ENCODE measurements at regions of chr7 and their contacts with region 1.

Region 1: GRCh38 chr7:107924841-107925504 is 34.0 kb downstream of the DLD start:
- DNase-seq: peak in 2 of 14 experiments; percentile 17 to 23
- ATAC-seq: peak; percentile 43
- H3K4me3 ChIP-seq: no peak overlapping the region
- H3K4me3 Mint-ChIP-seq: peak overlapping the region; percentile 5
- H3K27ac ChIP-seq: no peak overlapping the region
- H3K27ac Mint-ChIP-seq: peak overlapping the region; percentile 3
- H3K4me1 ChIP-seq: peaks cover 6% of the 10 kb centered on the region
- H3K4me1 Mint-ChIP-seq: peaks cover 54% of the 10 kb centered on the region
- H3K27me3 ChIP-seq: no peaks in the 10 kb centered on the region
- H3K27me3 Mint-ChIP-seq: no peaks in the 10 kb centered on the region
- CTCF ChIP-seq: no peak

Region 2: DNA sequence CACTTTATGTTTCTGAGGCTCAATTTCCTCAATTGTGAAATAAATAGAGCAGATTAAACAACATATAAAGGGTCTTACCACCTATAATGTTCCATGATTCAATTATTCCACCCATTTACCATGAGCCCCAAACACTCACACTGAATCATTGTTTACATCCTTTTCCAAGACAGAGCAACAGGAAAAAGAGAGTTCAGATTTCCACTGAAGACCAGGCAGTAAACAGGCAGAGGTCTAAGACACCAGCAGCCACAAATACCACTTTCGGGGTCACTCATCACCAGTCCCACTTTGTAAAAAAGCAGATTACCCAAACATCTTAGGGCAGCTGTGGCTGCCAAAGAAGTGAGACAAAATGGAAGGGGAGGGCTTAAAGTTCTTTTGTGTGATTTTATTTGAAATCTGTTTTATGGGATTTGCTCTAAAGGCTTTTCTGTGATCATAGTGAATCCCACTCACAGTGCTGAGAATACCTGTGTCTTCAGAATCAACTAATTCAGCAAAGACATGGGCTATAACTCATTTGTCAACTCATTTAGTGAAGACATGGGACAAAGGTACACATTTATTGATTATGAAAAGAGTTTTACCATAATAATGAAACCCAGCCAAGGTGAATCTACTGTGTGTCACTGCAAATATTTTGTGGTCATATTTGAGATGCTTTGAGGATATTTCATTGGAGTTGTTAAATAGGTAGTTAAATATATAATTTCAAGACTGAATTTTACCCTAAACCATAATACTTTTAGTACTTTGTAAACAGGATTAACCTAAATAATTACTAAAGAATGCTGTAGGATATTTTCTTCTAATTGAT is 58.8 kb before region 1 on chr7:
- CTCF ChIA-PET with region 1: no interaction called
- POLR2A ChIA-PET with region 1: no interaction called
- intact Hi-C with region 1: no loop called
- DNase-seq: no peak
- ATAC-seq: no peak
- H3K4me3 ChIP-seq: no peak overlapping the region
- H3K4me3 Mint-ChIP-seq: no peak overlapping the region
- H3K27ac ChIP-seq: peak overlapping the region in 1 of 2 donors; percentile 23
- H3K27ac Mint-ChIP-seq: peak overlapping the region; percentile 46
- H3K4me1 ChIP-seq: peaks cover 20% of the 10 kb centered on the region
- H3K4me1 Mint-ChIP-seq: peaks cover 34% of the 10 kb centered on the region
- H3K27me3 ChIP-seq: no peaks in the 10 kb centered on the region
- H3K27me3 Mint-ChIP-seq: no peaks in the 10 kb centered on the region
- CTCF ChIP-seq: no peak

Region 3: GRCh38 chr7:107911981-107912380 is 13.0 kb before region 1 on chr7:
- CTCF ChIA-PET with region 1: no interaction called
- POLR2A ChIA-PET with region 1: no interaction called
- intact Hi-C with region 1: loop called in 1 of 2 experiments (anchors 2 kb)
- DNase-seq: no peak
- ATAC-seq: no peak
- H3K4me3 ChIP-seq: no peak overlapping the region
- H3K4me3 Mint-ChIP-seq: no peak overlapping the region
- H3K27ac ChIP-seq: no peak overlapping the region
- H3K27ac Mint-ChIP-seq: no peak overlapping the region
- H3K4me1 ChIP-seq: no peaks in the 10 kb centered on the region
- H3K4me1 Mint-ChIP-seq: peaks cover 39% of the 10 kb centered on the region
- H3K27me3 ChIP-seq: no peaks in the 10 kb centered on the region
- H3K27me3 Mint-ChIP-seq: no peaks in the 10 kb centered on the region
- CTCF ChIP-seq: no peak

Measured in CD4-positive, alpha-beta T cell (primary cell).